ENCODE measurements at regions of chr12 and their contacts with region 1.

Region 1: GRCh38 chr12:12266873-12267741 is at the start of gene LRP6:
- DNase-seq: peak; percentile 91

Region 2: GRCh38 chr12:12254553-12254952 is 12.6 kb before region 1 on chr12:
- CTCF ChIA-PET with region 1: no interaction called
- POLR2A ChIA-PET with region 1: interaction called, 10 read pairs
- DNase-seq: no peak

Region 3: DNA sequence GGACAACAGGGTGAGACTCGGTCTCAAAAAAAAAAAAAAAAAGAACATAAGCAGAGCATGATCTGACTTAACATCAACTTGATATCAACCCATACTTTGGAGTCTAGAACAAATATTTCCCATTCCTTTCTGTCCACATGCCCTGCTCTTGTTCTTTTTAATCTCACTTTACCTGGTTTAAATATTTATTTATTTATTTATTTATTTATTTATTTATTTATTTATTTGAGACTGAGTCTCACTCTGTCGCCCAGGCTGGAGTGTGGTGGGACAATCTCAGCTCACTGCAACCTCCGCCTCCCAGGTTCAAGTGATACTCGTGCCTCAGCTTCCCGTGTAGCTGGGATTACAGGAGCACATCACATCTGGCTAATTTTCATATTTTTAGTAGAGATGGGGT is 19.3 kb after region 1 on chr12:
- CTCF ChIA-PET with region 1: no interaction called
- POLR2A ChIA-PET with region 1: no interaction called
- DNase-seq: no peak

Region 4: DNA sequence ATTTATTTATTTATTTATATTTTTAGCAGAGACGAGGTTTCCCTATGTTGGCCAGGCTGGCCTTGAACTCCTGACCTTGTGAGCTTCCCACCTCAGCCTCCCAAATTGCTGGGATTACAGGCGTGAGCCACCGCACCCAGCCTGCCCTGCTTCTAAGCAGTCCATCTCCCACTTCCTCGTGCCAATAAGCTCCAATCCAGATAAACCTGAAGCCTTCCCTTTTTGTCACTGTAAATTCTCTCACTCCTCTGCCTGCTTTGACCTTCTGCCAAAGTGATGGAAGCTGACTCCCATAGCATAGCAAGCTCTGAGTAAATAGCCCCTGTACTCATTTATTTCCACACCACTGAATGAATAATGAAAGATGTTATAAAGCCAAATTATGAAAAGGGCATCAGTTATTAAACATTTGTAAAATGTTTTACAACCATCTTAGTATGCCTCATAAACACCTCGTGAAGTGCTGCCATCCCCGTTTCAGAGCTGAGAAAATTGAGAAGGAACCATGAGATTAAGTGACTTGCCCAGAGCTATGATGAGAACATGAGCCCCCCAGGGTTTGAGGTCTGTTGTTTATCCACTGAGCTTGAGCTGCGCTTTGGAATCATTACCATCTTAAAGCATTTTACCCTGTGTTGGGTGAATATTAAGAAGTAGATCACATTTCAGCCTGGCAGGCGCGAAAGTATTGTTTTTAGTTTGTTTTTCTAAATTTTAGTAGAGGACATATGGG is 52.5 kb after region 1 on chr12:
- CTCF ChIA-PET with region 1: no interaction called
- POLR2A ChIA-PET with region 1: interaction called, 21 read pairs
- DNase-seq: peak; percentile 29

Region 5: DNA sequence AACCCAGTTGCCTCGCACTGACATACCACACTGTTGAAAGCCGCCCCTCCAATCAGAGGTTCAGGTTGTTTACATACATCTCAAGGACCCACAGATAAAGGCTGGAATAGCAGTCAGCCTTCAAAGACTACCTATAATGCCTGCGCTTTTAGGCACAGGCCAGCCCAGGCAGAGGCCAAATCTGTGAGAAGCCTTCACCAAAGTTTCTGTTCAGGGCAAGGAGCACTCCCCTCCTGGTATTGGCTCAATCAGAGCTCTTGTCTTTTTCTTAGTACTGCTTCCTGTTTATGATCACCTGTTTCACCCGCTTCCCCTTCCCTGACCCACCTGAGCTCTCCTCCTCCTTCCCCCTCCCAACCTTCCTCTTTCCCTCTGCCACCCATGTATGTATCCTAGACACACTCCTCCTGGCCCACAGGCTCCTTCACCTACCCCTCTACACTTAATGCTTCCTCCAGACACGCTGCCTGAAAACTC is 260.8 kb after region 1 on chr12:
- CTCF ChIA-PET with region 1: no interaction called
- POLR2A ChIA-PET with region 1: no interaction called
- DNase-seq: no peak